GM12878 (cell line): ENCODE measurements at regions of chr16 and their contacts with region 1.

Region 1: GRCh38 chr16:77043076-77043475 is 147.9 kb upstream of the MON1B start:
- DNase-seq: no peak
- ATAC-seq: peak; percentile 40; the same call in 2 of the 3 replicates
- H3K4me3 ChIP-seq: no peak overlapping the region
- H3K27ac ChIP-seq: no peak overlapping the region
- H3K4me1 ChIP-seq: no peaks in the 10 kb centered on the region
- H3K27me3 ChIP-seq: no peaks in the 10 kb centered on the region
- CTCF ChIP-seq: peak; percentile 13 to 35 (median 16); a peak in 2 of 6 replicates
- EP300 ChIP-seq: no peak
- POLR2A ChIP-seq: no peak
- RAD21 ChIP-seq: peak; percentile 25; the same call in 1 of the 2 replicates

Region 2: GRCh38 chr16:76278980-76279379 is 764.1 kb before region 1 on chr16:
- CTCF ChIA-PET with region 1: interaction called, 10 read pairs
- POLR2A ChIA-PET with region 1: no interaction called
- RAD21 ChIA-PET with region 1: no interaction called
- SMC1A ChIA-PET with region 1: no interaction called
- in situ Hi-C with region 1: no loop called
- intact Hi-C with region 1: no loop called
- DNase-seq: no peak
- ATAC-seq: peak; percentile 77
- H3K4me3 ChIP-seq: no peak overlapping the region
- H3K27ac ChIP-seq: no peak overlapping the region
- H3K4me1 ChIP-seq: no peaks in the 10 kb centered on the region
- H3K27me3 ChIP-seq: no peaks in the 10 kb centered on the region
- CTCF ChIP-seq: peak; percentile 25 to 55 (median 31); a peak in 4 of 6 replicates
- EP300 ChIP-seq: no peak
- POLR2A ChIP-seq: no peak
- RAD21 ChIP-seq: peak; percentile 65

Region 3: GRCh38 chr16:76668207-76668725 is 374.8 kb before region 1 on chr16:
- CTCF ChIA-PET with region 1: no interaction called
- POLR2A ChIA-PET with region 1: no interaction called
- RAD21 ChIA-PET with region 1: no interaction called
- SMC1A ChIA-PET with region 1: no interaction called
- in situ Hi-C with region 1: no loop called
- intact Hi-C with region 1: loop called (anchors 10 kb)
- DNase-seq: no peak
- ATAC-seq: peak; percentile 55; the same call in 2 of the 3 replicates
- H3K4me3 ChIP-seq: no peak overlapping the region
- H3K27ac ChIP-seq: no peak overlapping the region
- H3K4me1 ChIP-seq: no peaks in the 10 kb centered on the region
- H3K27me3 ChIP-seq: no peaks in the 10 kb centered on the region
- CTCF ChIP-seq: peak in 1 of 3 experiments; percentile 9; a peak in 1 of 6 replicates
- EP300 ChIP-seq: no peak
- POLR2A ChIP-seq: no peak
- RAD21 ChIP-seq: no peak